Posterior vena cava (tissue), 2 donors: ENCODE measurements at regions of chr6 and their contacts with region 1.

Region 1: DNA sequence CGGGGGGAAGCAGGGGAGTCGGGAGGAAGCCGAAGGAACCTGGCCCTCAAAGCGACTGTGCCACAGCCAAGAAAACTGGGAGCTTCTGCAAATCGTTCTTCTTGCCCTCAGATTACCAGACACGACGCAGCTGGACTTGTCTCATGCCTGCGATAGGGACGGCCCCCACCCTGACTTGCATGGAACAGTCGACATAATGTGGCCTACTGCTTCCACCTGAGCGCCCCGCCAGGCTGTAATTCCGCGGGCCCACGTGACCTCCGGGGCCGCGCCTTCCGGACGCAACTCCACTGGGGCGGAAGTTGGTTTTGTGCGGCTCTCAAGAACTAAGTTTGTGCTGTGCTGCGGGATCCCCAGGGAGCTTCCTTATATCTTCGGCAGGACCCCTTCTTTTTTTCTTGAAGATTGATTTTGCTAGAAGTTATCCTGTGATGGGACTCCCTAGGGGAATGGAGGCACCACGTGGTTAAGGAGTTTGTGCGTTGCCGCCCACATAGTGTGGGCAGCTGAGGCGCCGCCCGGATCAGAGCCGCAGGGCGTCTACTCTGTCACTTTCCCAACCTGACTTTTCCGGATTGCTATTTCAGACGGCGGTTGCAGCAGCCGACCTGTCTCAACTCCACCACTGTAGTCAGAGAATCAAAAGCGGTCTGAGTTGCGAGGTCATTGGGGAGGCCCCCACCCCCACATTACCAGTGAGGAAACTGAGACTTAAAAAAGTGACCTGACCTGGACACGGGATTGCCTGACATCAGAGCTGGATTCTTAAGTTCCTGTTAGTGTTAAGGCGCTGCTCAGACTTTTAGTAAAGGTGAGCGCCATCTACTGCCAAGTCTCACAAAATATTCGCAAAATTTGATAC is 540 bp upstream of the CD164 start:
- DNase-seq: peak; percentile 98

Region 2: GRCh38 chr6:109187399-109188114 is 195.2 kb before region 1 on chr6:
- intact Hi-C with region 1: loop called in 1 of 2 experiments (anchors 2 kb)
- DNase-seq: peak; percentile 83

Region 3: GRCh38 chr6:109202409-109203284 is 180.2 kb before region 1 on chr6:
- intact Hi-C with region 1: no loop called
- DNase-seq: no peak

Region 4: DNA sequence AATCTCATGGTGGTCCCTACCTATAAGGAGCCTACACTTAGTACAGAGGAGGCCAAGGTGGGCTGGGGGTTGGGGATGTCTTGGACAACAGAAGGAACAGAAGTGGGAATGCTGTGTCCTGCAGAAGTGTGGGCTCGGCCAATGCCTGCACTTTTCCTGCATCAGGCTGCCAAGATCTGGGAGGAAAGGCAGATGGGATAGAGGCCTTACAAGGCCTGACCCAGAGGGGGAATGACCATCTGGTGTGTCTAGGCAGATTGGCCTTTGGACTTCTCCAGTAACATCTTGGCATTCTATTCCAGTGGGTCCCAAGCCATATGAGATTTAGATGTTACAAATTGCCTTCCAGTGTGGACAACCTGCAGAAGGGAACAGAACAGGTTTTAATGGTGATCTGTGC is 470.6 kb after region 1 on chr6:
- intact Hi-C with region 1: no loop called
- DNase-seq: no peak